Adrenal gland (tissue), 19 donors: ENCODE measurements at regions of chr2 and their contacts with region 1.

Region 1: GRCh38 chr2:85813982-85814801 is 60.4 kb downstream of the ATOH8 start:
- DNase-seq: peak; percentile 89 to 97 (median 93)
- H3K4me3 ChIP-seq: no peak overlapping the region
- H3K27ac ChIP-seq: no peak overlapping the region
- H3K4me1 ChIP-seq: no peaks in the 10 kb centered on the region
- H3K27me3 ChIP-seq: no peaks in the 10 kb centered on the region
- CTCF ChIP-seq: peak; percentile 92 to 98 (median 96)
- POLR2A ChIP-seq: no peak

Region 2: DNA sequence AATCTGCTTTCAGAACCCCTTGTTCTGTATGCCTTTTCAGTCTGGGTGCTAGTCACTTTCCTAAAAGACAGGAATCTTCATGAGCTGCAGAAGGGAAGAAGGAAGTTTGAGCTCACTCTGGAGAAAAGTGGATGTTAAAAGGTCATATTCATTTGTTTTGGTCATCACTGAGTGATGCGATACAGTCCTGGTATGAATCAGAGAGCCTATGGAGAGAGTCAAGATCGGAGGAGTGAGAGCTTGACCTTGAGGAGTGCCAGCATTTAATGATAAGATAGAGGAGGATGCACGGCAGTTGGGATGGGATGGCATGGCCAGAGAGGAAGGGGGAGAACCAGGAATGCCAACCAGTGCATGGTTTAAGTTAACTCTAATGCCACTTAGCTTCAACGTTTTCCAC is 178.6 kb before region 1 on chr2:
- intact Hi-C with region 1: loop called in 1 of 2 experiments (anchors 10 kb)
- DNase-seq: peak in 1 of 7 donors; percentile 34
- H3K4me3 ChIP-seq: no peak overlapping the region
- H3K27ac ChIP-seq: peak overlapping the region in 1 of 5 donors; percentile 11
- H3K4me1 ChIP-seq: peaks cover 0 to 8% of the 10 kb centered on the region in 2 donors
- H3K27me3 ChIP-seq: no peaks in the 10 kb centered on the region
- CTCF ChIP-seq: no peak
- POLR2A ChIP-seq: no peak

Region 3: GRCh38 chr2:85728883-85729824 is 85.0 kb before region 1 on chr2:
- intact Hi-C with region 1: loop called (anchors 2 to 5 kb)
- DNase-seq: peak; percentile 85 to 94 (median 90)
- H3K4me3 ChIP-seq: no peak overlapping the region
- H3K27ac ChIP-seq: peak overlapping the region in 1 of 5 donors; percentile 45
- H3K4me1 ChIP-seq: peaks cover 0 to 18% of the 10 kb centered on the region in 2 donors
- H3K27me3 ChIP-seq: no peaks in the 10 kb centered on the region
- CTCF ChIP-seq: peak; percentile 86 to 97 (median 92)
- POLR2A ChIP-seq: no peak

Region 4: DNA sequence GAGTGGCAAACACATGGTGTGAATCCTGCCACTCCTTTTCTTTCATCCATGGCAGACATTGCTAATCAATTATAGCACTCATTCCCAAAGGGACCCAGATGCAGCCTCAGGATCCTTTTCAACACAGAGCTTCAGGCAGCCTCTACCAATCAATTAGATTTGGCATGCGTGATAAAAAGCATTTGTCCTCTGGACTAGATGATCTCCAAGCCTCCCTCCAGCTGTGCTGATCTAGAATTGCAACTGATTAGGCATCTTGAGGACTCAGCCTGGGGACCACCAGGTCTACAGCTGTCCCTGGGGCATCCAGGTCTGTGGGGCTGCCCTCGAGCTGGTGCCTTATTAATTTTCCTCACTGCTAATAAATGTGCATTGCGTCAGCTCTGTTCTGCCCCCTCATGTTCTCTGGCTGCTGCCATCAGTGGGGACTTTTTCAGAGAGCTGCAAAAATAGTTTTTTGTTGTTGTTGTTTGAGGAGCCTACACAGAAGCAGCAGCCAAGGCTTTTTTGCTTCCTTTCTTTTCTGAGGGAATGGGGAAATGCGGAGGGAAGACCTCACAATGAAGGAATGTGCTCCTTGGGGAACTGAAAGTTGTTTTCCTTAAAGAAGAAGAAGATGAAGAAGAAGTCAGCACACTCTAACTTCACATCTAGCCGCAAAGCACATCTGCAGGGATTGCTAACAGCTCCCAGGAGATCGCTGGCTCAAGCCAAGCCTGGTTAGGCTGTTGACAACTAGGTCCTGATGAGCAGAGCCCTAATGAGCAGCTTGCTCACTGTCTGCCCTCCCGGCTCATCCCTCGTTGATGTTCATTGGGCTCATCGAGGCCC is 69.2 kb before region 1 on chr2:
- intact Hi-C with region 1: loop called (anchors 5 kb)
- DNase-seq: peak in 2 of 7 donors; percentile 40 to 65
- H3K4me3 ChIP-seq: no peak overlapping the region
- H3K27ac ChIP-seq: peak overlapping the region in 2 of 5 donors; percentile 67 to 77
- H3K4me1 ChIP-seq: peaks cover 17 to 47% of the 10 kb centered on the region in 2 donors
- H3K27me3 ChIP-seq: no peaks in the 10 kb centered on the region
- CTCF ChIP-seq: no peak
- POLR2A ChIP-seq: no peak

Region 5: DNA sequence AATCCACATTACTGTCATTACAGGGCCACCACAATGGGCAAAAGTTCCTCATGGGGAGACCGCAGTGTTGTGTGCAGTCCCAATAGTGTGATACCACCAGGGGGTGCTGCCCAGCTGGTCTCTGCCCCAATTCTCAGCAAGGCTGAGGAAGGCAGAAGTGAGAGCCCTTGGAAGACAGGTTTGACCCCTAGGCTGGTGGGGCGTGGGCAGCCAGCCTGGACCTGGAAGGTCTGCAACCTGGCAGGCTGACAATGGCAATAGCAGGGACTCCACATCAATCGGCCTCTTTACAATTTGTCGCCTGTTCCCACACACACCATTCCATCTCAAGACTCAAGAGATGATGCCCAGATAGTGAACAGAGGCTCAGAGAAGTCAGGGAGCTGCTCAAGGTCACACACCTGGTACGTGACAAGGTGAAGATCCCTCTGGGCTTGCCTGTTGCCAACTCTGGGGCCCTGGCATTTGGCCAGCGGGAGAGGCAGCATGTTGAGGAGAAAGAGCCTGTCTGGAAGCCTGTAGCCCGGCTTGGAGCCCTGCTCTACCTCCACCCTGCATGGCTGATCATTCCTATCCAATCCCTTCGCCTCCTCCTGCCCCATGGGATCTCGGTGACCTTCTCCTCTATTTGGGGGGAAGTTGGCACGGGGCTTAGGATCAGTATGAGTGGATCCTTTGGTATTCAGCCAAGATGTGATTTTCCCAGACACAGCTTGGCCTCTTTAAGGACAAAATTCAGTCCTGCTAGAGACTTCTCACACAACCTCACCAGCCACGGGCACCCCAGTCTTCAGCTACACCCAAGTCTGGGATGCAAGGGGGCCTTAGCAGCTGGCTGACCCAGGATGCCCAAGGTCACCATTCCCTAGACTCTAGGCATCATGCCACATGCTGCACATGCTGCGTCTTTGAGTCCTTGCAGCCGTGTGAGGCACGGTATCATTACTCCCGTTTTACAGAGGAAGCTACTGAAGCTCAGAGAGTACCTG is 63.3 kb before region 1 on chr2:
- intact Hi-C with region 1: loop called (anchors 5 kb)
- DNase-seq: peak; percentile 68 to 88 (median 80)
- H3K4me3 ChIP-seq: no peak overlapping the region
- H3K27ac ChIP-seq: no peak overlapping the region
- H3K4me1 ChIP-seq: peaks cover 22 to 40% of the 10 kb centered on the region in 2 donors
- H3K27me3 ChIP-seq: peaks cover 19% of the 10 kb centered on the region
- CTCF ChIP-seq: peak; percentile 78 to 90 (median 86)
- POLR2A ChIP-seq: no peak

Region 6: DNA sequence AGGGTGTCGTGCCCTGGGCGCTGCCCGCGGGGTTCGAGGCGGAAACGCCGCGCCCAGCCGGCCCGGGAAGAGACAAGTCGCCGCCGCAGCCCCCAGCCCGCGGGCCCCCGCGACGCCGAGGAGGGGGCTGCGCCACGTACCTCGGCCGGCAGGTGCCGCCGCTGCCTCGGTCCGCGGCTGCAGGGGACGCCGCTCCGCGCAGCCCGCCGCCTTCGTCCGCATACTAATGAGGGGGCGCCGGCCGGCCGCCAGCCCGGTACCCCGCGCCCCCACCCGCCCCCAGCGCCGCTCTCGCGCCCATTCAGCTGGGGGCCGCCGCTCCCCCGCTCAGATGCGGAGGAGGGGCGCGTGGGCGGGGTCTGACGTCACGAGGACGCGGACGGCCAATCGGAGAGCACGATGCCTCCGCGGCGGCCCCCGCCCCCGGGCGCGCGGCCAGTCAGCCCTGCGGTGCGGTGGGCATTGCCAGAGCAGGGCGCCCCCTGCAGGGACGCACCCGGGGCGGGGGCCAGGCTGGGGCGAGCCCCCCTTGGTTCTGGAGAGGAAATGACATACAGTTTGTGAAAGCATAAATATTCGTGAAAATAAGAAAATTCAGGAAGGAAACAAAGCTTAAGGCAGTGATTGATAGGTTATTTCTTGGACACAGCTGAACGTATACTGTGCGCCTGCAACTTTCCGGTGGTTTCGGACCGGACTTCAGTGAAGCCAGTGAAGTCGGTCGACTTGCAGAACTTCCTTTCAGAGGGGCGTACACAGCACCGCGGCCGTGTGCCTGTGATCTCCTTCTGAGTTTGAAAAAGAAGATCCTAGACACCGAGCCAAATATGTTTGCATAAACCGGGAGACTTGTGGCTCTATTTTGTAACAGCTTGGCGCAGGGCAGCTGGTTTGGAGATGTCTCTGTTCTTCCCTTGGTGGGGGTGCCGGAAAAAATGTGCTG is 74.8 kb after region 1 on chr2 and contains the start of gene ST3GAL5:
- intact Hi-C with region 1: no loop called
- DNase-seq: peak; percentile 91 to 96 (median 93)
- H3K4me3 ChIP-seq: peak within 1 kb of the TSS; percentile 31 to 98 (median 64)
- H3K27ac ChIP-seq: peak within 1 kb of the TSS; percentile 84 to 99 (median 95)
- H3K4me1 ChIP-seq: peaks cover 54 to 75% of the 10 kb centered on the region in 2 donors
- H3K27me3 ChIP-seq: no peaks in the 10 kb centered on the region
- CTCF ChIP-seq: peak; percentile 9 to 69 (median 58)
- POLR2A ChIP-seq: peak; percentile 45 to 91
- total RNA-seq, gene ST3GAL5: 25.6 to 172 (median 89.2) TPM

Region 7: DNA sequence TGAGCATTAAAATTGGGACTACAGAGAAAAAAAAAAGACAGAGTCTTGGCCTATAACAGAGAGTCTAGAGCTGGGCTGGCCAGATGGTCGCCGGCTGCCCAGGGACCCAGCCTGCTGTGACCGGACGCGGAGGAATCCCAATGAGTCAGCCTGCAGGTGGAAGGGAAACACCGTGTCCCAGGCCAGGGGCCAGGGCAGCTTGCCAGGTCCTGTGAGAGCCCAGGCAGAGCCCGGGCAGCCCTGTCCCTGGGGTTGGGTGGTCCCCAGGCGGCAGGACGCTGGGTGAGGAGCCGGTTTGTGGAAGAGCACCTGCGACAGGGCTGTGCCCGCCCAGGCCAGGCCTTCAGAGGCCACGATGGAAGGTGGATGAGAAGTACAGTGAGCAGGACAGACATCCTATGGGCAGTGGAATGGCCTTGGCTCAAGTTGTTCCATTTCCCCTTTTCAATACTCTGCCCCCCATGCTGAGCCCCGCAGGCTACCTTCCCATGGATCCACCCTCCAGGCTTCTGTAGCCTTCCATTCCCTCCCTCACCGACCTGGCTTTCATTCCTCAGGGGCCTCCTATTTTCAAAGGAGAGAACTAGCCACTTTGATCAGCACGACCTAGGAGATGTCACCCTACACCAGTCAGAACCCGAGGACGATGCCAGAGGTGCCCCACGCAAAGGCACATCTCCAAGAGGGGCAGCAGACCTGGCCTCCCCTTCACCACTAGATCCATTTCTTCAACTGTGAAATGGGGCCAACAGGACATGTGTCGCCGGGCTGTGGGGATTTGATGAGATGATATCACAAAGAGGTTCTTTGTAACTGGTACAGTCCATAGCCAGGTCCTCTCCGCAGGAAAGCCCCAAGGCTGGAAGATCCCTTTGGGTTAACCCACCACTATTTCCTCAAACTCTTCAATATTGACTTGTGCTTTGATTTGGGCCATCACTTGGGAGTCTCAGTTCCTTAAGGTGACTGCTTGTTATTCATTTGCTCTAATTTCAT is 204.0 kb after region 1 on chr2:
- intact Hi-C with region 1: no loop called
- DNase-seq: peak; percentile 62 to 86 (median 83)
- H3K4me3 ChIP-seq: no peak overlapping the region
- H3K27ac ChIP-seq: no peak overlapping the region
- H3K4me1 ChIP-seq: peaks cover 0 to 6% of the 10 kb centered on the region in 2 donors
- H3K27me3 ChIP-seq: no peaks in the 10 kb centered on the region
- CTCF ChIP-seq: no peak
- POLR2A ChIP-seq: no peak

Region 8: DNA sequence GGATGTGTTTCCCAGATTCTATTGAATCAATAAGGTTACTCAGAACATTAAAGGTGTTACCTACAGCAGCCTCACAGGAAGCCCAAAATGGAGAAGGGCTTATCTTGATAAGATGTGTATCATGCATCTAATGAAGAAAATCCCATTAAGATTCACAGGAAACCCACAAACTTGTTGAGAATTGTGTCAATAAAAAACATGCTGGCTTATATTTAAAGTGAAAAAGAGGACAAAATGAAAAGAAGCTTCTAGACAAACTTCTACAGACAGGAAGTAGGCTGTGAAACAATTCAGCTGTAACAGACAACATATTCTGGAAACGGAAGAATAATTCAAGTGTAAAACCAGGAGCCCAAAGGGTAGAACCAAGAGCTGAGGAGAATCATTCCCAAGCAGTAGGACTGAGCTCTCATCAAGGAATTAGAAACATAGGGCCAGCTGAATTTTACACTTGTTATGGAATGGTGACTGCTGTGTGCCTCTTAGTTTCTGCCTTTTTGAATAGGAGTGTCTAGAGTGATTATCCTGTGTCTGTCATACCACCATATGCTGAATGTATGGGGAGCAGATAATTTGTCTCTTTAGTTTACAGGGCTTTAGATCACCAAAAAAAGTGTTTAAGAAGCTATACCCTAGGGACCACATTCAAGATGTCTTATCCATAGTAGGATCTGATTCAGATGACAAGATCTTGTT is 371.5 kb after region 1 on chr2:
- intact Hi-C with region 1: no loop called
- DNase-seq: no peak
- H3K4me3 ChIP-seq: peak overlapping the region in 1 of 4 donors; percentile 18
- H3K27ac ChIP-seq: peak overlapping the region in 4 of 5 donors; percentile 55 to 81 (median 76)
- H3K4me1 ChIP-seq: peaks cover 9 to 54% of the 10 kb centered on the region in 2 donors
- H3K27me3 ChIP-seq: no peaks in the 10 kb centered on the region
- CTCF ChIP-seq: no peak
- POLR2A ChIP-seq: no peak

Region 9: GRCh38 chr2:86649119-86649947 is 835.1 kb after region 1 on chr2:
- intact Hi-C with region 1: no loop called
- DNase-seq: no peak
- H3K4me3 ChIP-seq: no peak overlapping the region
- H3K27ac ChIP-seq: no peak overlapping the region
- H3K4me1 ChIP-seq: no peaks in the 10 kb centered on the region
- H3K27me3 ChIP-seq: no peaks in the 10 kb centered on the region
- CTCF ChIP-seq: no peak
- POLR2A ChIP-seq: no peak